ENCODE measurements at regions of chr12 and their contacts with region 1.

Region 1: GRCh38 chr12:125340791-125341190 is 275.6 kb downstream of the AACS start:
- DNase-seq: no peak
- H3K4me3 ChIP-seq: no peak overlapping the region
- H3K27ac ChIP-seq: no peak overlapping the region
- H3K4me1 ChIP-seq: no peaks in the 10 kb centered on the region
- H3K27me3 ChIP-seq: no peaks in the 10 kb centered on the region
- CTCF ChIP-seq: no peak

Region 2: GRCh38 chr12:125387206-125387605 is 46.4 kb after region 1 on chr12:
- CTCF ChIA-PET with region 1: no interaction called
- dilution Hi-C with region 1: loop called (anchors 5 kb)
- in situ Hi-C with region 1: no loop called
- intact Hi-C with region 1: no loop called
- DNase-seq: no peak
- H3K4me3 ChIP-seq: no peak overlapping the region
- H3K27ac ChIP-seq: no peak overlapping the region
- H3K4me1 ChIP-seq: no peaks in the 10 kb centered on the region
- H3K27me3 ChIP-seq: no peaks in the 10 kb centered on the region
- CTCF ChIP-seq: no peak